ENCODE measurements at regions of chrX and their contacts with region 1.

Region 1: GRCh38 chrX:38803586-38804431 is 2.5 kb downstream of the MID1IP1 start:
- DNase-seq: peak; percentile 54 to 67 (median 58)
- H3K4me3 ChIP-seq: peak overlapping the region; percentile 65 to 72
- H3K4me3 Mint-ChIP-seq: peak overlapping the region; percentile 85 to 95 (median 92)
- H3K27ac ChIP-seq: peak overlapping the region; percentile 80
- H3K27ac Mint-ChIP-seq: peak overlapping the region; percentile 86 to 95 (median 93)
- H3K4me1 ChIP-seq: peaks cover 26% of the 10 kb centered on the region
- H3K4me1 Mint-ChIP-seq: peaks cover 11 to 62% (median 24%) of the 10 kb centered on the region in 4 donors
- H3K27me3 ChIP-seq: no peaks in the 10 kb centered on the region
- H3K27me3 Mint-ChIP-seq: no peaks in the 10 kb centered on the region

Region 2: DNA sequence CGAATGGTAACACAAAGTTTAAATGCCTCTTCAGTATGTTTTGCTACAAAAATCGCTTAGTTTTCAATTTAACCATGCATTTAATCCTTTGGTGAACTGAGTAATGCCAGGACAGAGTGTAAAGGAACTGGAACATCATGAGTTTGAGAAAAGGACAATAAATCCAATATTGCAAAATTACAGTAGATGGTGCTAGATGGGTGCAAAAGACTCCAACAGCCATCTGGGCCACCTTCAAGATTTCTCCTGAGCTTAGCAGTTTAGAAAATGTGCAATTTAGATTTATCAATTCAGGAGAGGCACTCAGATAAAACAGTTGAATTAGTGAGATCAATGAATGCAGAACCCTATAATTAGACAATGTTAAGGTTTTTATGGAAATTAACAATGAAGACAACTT is 35.7 kb before region 1 on chrX:
- CTCF ChIA-PET with region 1: interaction called, 4 read pairs
- POLR2A ChIA-PET with region 1: interaction called, 4 read pairs
- intact Hi-C with region 1: loop called (anchors 5 kb)
- DNase-seq: peak in 4 of 5 donors; percentile 24 to 25 (median 24)
- H3K4me3 ChIP-seq: no peak overlapping the region
- H3K4me3 Mint-ChIP-seq: no peak overlapping the region
- H3K27ac ChIP-seq: no peak overlapping the region
- H3K27ac Mint-ChIP-seq: no peak overlapping the region
- H3K4me1 ChIP-seq: no peaks in the 10 kb centered on the region
- H3K4me1 Mint-ChIP-seq: no peaks in the 10 kb centered on the region
- H3K27me3 ChIP-seq: no peaks in the 10 kb centered on the region
- H3K27me3 Mint-ChIP-seq: no peaks in the 10 kb centered on the region

Region 3: DNA sequence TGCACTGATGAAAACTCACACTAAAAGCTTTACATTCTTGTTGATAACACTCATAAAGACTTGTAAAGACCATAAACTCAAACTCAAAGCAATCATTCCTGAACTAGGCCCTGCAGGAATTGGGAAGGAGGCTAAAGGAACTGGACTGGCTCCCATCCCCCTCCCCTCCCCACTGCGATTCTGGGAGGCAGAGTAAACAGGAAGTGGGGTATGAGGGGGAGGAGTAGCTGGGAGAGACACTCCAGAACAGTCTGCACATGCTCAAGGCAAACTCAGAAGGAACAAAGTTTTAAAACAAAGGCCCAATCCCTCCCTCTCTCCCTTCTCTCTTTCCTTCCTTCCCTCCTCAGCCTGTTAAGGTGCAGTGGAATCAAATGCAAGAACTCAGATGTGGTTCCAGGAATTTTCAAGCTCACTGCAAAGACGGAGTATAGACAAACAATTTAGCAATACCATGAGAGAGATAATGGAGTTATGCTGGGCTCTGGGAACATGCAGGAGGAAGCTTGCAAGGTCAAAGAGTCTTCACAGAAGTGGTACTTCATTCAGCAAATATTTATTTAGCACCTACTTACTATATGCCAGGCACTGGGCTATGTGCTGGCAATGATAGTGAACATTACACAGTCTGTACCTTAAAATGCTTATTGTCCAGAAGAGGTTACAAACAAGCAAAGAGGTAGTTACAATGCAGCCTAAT is 13.3 kb after region 1 on chrX:
- CTCF ChIA-PET with region 1: interaction called, 7 read pairs
- POLR2A ChIA-PET with region 1: interaction called, 91 read pairs
- intact Hi-C with region 1: loop called (anchors 1 kb)
- DNase-seq: no peak
- H3K4me3 ChIP-seq: no peak overlapping the region
- H3K4me3 Mint-ChIP-seq: peak overlapping the region in 5 of 8 donors; percentile 23 to 79 (median 49)
- H3K27ac ChIP-seq: peak overlapping the region; percentile 49
- H3K27ac Mint-ChIP-seq: peak overlapping the region in 1 of 7 donors; percentile 88
- H3K4me1 ChIP-seq: peaks cover 68% of the 10 kb centered on the region
- H3K4me1 Mint-ChIP-seq: peaks cover 9 to 20% (median 14%) of the 10 kb centered on the region in 4 donors
- H3K27me3 ChIP-seq: no peaks in the 10 kb centered on the region
- H3K27me3 Mint-ChIP-seq: no peaks in the 10 kb centered on the region

Region 4: GRCh38 chrX:38879631-38880220 is 75.9 kb after region 1 on chrX:
- CTCF ChIA-PET with region 1: interaction called, 4 read pairs
- POLR2A ChIA-PET with region 1: interaction called, 28 read pairs
- intact Hi-C with region 1: loop called (anchors 10 kb)
- DNase-seq: peak; percentile 6 to 35 (median 8)
- H3K4me3 ChIP-seq: no peak overlapping the region
- H3K4me3 Mint-ChIP-seq: peak overlapping the region in 6 of 8 donors; percentile 17 to 54 (median 45)
- H3K27ac ChIP-seq: no peak overlapping the region
- H3K27ac Mint-ChIP-seq: peak overlapping the region in 4 of 7 donors; percentile 11 to 64 (median 22)
- H3K4me1 ChIP-seq: peaks cover 18% of the 10 kb centered on the region
- H3K4me1 Mint-ChIP-seq: peaks cover 12 to 22% (median 16%) of the 10 kb centered on the region in 4 donors
- H3K27me3 ChIP-seq: no peaks in the 10 kb centered on the region
- H3K27me3 Mint-ChIP-seq: no peaks in the 10 kb centered on the region

Region 5: DNA sequence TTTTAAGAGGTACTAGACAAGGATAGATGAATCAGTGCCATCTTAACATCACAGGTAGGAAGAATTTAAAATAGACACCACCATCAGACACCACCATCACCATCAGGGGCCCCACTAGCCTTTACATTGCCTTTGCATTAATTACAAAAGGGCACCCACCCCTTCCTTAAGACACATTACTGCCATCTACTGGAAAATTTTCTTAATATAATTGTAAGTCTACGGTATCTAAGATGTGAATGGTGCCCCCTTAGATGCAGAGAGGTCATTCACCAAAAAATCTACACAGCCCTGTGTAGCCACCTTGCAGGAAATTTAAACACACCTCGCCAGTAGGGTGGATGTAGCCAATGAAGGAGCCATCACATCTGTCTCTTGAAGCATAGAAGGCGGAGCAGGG is 181.6 kb after region 1 on chrX:
- CTCF ChIA-PET with region 1: interaction called, 14 read pairs
- POLR2A ChIA-PET with region 1: interaction called, 7 read pairs
- intact Hi-C with region 1: loop called (anchors 1 kb)
- DNase-seq: peak in 4 of 5 donors; percentile 24 to 35 (median 28)
- H3K4me3 ChIP-seq: no peak overlapping the region
- H3K4me3 Mint-ChIP-seq: no peak overlapping the region
- H3K27ac ChIP-seq: no peak overlapping the region
- H3K27ac Mint-ChIP-seq: no peak overlapping the region
- H3K4me1 ChIP-seq: no peaks in the 10 kb centered on the region
- H3K4me1 Mint-ChIP-seq: peaks cover 0 to 2% (median 0%) of the 10 kb centered on the region in 4 donors
- H3K27me3 ChIP-seq: no peaks in the 10 kb centered on the region
- H3K27me3 Mint-ChIP-seq: no peaks in the 10 kb centered on the region

Region 6: GRCh38 chrX:39149761-39150160 is 346.0 kb after region 1 on chrX:
- CTCF ChIA-PET with region 1: interaction called, 6 read pairs
- POLR2A ChIA-PET with region 1: no interaction called
- intact Hi-C with region 1: loop called (anchors 1 kb)
- DNase-seq: peak in 4 of 5 donors; percentile 35 to 46 (median 40)
- H3K4me3 ChIP-seq: no peak overlapping the region
- H3K4me3 Mint-ChIP-seq: no peak overlapping the region
- H3K27ac ChIP-seq: no peak overlapping the region
- H3K27ac Mint-ChIP-seq: no peak overlapping the region
- H3K4me1 ChIP-seq: no peaks in the 10 kb centered on the region
- H3K4me1 Mint-ChIP-seq: no peaks in the 10 kb centered on the region
- H3K27me3 ChIP-seq: no peaks in the 10 kb centered on the region
- H3K27me3 Mint-ChIP-seq: no peaks in the 10 kb centered on the region